Activated naive CD4-positive, alpha-beta T cell treated with anti-CD3 and anti-CD28 coated beads, Interleukin-2, amount 10 ng/mL, durations not matched to agents 7 days and 5 days (primary cell): ENCODE measurements at regions of chr7 and their contacts with region 1.

Region 1: DNA sequence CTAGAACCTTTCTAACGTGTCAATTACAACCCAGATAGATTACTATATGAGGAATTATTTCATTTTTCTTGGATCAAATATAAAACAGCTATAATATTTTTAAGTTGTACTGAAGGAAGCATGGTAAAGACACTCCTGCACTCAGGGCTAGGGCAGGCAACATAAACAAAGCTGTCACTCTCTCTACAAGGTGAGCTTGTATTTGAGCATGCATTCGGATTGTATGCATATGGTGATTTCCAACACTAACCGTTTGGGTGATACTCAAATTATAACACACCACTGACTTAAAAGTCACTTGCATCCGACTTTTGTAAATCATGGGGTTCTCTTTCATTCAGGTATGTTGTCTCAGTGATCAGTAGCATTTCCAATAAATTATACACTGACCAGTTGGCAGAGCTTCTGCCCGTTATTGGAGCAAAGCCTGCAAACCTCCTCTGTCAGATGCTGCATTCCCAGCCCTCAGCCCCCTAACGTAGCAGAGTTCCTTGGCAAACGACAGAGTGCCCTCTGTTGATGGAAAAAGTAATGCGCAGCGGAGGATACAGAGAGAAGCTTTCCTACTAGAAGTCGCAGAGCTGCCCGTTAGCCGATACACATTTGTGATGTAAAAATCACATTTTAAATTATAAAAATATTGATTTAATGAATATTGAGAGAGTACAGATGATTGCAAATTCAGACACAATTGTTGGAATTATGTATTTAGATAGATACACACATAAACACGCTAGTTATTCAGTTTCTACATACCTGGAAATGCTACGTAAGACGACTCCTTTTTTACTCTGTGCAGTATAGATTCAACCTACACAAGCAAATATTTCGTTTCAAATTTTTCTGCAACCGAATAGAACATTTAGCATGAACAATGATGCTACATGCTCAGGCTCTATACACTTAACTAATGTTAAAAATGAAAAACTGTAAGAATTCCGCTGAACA is 173.9 kb upstream of the SP4 start:
- DNase-seq: peak; percentile 64
- H3K4me3 Mint-ChIP-seq: peak overlapping the region; percentile 60
- H3K27ac Mint-ChIP-seq: no peak overlapping the region
- H3K4me1 Mint-ChIP-seq: peaks cover 20% of the 10 kb centered on the region
- H3K27me3 Mint-ChIP-seq: peaks cover 45% of the 10 kb centered on the region

Region 2: GRCh38 chr7:21326916-21327315 is 72.9 kb after region 1 on chr7:
- CTCF ChIA-PET with region 1: no interaction called
- DNase-seq: no peak
- H3K4me3 Mint-ChIP-seq: no peak overlapping the region
- H3K27ac Mint-ChIP-seq: no peak overlapping the region
- H3K4me1 Mint-ChIP-seq: peaks cover 10% of the 10 kb centered on the region
- H3K27me3 Mint-ChIP-seq: no peaks in the 10 kb centered on the region

Region 3: GRCh38 chr7:21400598-21400997 is 146.6 kb after region 1 on chr7:
- CTCF ChIA-PET with region 1: no interaction called
- DNase-seq: no peak
- H3K4me3 Mint-ChIP-seq: no peak overlapping the region
- H3K27ac Mint-ChIP-seq: no peak overlapping the region
- H3K4me1 Mint-ChIP-seq: no peaks in the 10 kb centered on the region
- H3K27me3 Mint-ChIP-seq: peaks cover 4% of the 10 kb centered on the region

Region 4: DNA sequence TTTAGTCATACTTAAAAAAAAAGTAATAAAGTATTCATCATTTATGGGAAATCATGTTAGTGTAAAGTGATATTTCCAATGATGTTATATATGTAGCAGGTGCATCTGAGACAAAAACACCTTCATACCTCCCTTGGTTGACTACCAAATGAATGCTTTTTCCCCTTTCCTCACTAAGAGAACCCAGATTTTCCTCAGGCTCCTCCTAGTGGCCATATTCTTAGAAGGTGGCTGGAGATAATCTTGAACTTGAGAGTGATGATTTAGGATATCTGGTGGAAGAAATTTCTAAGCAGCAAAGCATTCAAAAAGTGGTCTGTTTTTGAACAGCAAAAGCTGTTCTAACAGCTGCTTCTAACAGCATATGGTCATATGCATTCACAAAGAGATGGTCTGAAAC is 272.0 kb after region 1 on chr7:
- CTCF ChIA-PET with region 1: interaction called, 19 read pairs
- DNase-seq: no peak
- H3K4me3 Mint-ChIP-seq: no peak overlapping the region
- H3K27ac Mint-ChIP-seq: no peak overlapping the region
- H3K4me1 Mint-ChIP-seq: no peaks in the 10 kb centered on the region
- H3K27me3 Mint-ChIP-seq: peaks cover 8% of the 10 kb centered on the region

Region 5: GRCh38 chr7:21767300-21767900 is 513.4 kb after region 1 on chr7:
- CTCF ChIA-PET with region 1: interaction called, 26 read pairs
- DNase-seq: peak; percentile 32
- H3K4me3 Mint-ChIP-seq: no peak overlapping the region
- H3K27ac Mint-ChIP-seq: no peak overlapping the region
- H3K4me1 Mint-ChIP-seq: peaks cover 7% of the 10 kb centered on the region
- H3K27me3 Mint-ChIP-seq: peaks cover 19% of the 10 kb centered on the region